ENCODE measurements at regions of chr1 and their contacts with region 1.

Region 1: DNA sequence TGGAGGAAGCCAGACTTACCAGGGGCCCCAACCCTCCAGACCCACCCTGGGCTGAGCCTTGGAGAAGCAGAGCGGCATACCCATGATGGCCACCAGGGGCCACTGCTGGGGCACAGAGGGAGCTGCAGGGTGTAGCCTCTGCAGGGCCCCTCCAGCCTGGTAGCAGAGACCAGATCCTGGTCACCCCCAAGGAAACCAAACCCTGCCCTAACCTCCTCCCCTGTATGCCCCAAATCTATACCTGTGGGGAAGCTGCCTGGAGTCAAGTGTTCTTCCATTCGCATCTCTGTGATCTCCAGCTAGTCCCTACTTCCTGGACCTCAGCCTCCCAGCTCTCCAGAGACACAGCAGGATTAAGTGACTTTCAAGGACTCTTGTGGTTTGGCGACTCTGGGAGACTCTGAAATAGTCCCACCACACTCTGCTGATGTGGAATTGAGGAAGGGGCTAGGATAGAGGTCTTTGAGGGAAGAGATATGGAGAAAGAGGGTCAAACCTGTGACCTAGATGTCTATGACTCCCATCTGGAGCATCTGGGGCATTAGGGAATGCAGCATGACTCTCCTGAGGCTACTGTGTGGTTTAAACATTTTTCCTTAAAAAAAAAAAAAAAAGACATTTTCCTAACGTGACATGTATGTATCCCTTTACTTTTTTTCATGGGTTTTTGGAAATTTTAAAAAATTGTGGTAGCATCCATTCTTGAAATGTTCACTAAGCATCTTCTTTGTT is 119.2 kb upstream of the IPO9 start:
- DNase-seq: peak; percentile 88
- H3K4me3 Mint-ChIP-seq: no peak overlapping the region
- H3K27ac Mint-ChIP-seq: no peak overlapping the region
- H3K4me1 Mint-ChIP-seq: peaks cover 25% of the 10 kb centered on the region
- H3K27me3 Mint-ChIP-seq: no peaks in the 10 kb centered on the region
- CTCF ChIP-seq: peak; percentile 97

Region 2: DNA sequence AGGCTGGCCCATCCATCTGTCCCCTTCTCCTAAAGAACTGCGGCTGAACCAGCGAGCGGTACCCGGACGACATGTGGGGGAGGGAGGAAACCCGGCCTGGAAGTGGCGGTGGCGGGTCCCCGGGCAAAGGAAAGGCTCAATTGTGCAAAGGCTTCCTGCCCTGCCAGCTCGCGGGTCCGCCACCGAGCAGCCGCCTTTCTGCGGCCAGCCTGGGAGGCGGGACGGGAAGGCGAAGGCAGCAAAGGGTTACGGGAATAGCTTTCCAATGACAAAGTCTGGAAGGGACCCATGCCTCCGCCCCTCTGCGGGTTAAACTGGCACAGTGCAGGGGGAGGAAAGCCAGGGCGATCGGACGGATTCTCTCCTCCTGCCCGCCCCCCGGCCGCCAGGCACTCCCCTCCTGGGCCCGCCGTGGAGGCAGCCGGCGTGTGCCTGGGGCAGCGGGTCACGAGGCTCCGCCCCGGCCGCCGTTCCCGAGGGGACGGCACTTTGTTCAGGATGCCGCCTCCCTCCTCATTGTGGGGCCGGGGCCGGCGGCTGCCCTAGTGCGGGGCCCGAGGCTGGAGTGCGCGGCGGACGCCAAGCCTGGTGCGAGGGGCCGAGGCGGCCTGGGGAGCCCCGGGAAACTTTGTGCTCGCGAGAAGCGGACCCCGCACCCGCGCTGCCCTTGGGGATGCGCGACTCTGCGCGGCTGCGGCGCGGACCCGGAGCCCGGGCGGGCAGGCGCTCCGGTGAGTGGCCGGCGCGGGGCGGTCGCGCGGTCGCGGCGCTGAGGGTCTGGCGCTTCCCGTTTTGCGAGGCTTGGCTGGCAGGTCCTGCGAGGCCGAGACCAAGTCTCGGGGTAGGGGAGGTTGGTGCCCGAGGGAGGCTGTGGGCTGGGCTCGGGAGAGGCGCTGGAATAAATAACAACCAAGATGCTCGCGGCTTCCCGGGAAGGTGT is 170.8 kb before region 1 on chr1 and contains the start of gene NAV1:
- CTCF ChIA-PET with region 1: no interaction called
- intact Hi-C with region 1: no loop called
- DNase-seq: peak; percentile 67
- H3K4me3 Mint-ChIP-seq: peak within 1 kb of the TSS; percentile 85
- H3K27ac Mint-ChIP-seq: peak within 1 kb of the TSS; percentile 13
- H3K4me1 Mint-ChIP-seq: peaks cover 64% of the 10 kb centered on the region
- H3K27me3 Mint-ChIP-seq: no peaks in the 10 kb centered on the region
- CTCF ChIP-seq: no peak
- total RNA-seq, gene NAV1: 13.1 and 24.8 TPM in 2 replicates

Region 3: DNA sequence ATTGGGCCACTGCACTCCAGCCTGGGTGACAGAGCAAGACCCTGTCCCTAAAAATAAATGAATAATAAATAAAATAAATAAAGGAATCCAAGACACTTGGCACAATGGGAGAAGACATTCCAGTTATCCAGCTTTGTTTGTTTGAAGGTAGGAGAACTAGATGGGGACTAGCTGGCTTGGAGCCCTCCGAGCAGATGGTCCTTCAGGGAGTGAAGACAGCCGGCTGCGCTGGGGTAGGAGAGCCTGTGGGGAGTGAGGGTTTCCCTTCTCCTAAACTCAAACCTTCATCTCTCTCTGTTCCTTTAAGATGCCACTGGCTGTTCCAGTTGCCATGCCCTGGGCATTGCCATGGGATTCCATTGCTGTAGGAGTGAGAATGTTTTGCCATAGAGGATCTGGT is 50.2 kb before region 1 on chr1:
- CTCF ChIA-PET with region 1: no interaction called
- intact Hi-C with region 1: no loop called
- DNase-seq: no peak
- H3K4me3 Mint-ChIP-seq: no peak overlapping the region
- H3K27ac Mint-ChIP-seq: no peak overlapping the region
- H3K4me1 Mint-ChIP-seq: no peaks in the 10 kb centered on the region
- H3K27me3 Mint-ChIP-seq: peaks cover 38% of the 10 kb centered on the region
- CTCF ChIP-seq: no peak

Region 4: DNA sequence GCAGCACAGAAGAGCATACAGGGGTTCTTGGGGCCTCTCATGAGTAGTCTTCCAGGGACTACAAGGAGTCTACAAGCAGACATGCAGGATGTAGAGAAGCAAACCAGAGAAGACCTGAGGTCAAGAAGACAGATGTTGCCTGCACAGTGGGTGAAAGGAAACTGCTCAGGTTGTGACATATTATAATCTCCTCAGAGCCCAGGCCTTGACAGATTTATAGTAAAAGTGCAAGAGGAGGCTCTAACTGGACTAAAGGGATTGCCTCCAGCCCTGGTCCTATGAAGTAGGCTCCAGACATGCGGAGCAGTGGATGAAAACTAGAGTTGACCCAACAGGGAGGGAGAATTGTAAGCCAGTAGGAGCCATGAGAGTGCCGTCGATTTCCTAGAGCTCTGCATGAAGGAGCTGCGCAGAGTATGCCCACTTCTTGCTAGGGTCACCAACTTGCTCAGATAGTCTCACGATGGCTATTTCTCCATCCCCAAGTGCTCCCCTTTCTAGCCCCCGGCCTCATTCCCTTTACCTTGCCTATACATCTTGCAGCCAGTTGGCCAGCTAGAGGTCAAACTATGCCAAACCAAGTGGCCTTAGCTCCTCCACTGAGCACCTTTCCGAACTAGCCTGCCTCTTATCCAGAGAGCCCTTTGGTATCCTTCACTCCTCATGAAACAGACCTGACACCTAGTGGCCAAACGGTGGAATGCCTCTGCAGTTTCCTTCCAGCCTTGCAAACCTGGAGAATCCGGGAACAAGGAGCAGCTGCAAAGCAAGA is 83.0 kb after region 1 on chr1:
- CTCF ChIA-PET with region 1: interaction called, 140 read pairs
- intact Hi-C with region 1: loop called (anchors 1 kb)
- DNase-seq: peak; percentile 85
- H3K4me3 Mint-ChIP-seq: no peak overlapping the region
- H3K27ac Mint-ChIP-seq: no peak overlapping the region
- H3K4me1 Mint-ChIP-seq: peaks cover 10% of the 10 kb centered on the region
- H3K27me3 Mint-ChIP-seq: no peaks in the 10 kb centered on the region
- CTCF ChIP-seq: peak; percentile 90

Region 5: DNA sequence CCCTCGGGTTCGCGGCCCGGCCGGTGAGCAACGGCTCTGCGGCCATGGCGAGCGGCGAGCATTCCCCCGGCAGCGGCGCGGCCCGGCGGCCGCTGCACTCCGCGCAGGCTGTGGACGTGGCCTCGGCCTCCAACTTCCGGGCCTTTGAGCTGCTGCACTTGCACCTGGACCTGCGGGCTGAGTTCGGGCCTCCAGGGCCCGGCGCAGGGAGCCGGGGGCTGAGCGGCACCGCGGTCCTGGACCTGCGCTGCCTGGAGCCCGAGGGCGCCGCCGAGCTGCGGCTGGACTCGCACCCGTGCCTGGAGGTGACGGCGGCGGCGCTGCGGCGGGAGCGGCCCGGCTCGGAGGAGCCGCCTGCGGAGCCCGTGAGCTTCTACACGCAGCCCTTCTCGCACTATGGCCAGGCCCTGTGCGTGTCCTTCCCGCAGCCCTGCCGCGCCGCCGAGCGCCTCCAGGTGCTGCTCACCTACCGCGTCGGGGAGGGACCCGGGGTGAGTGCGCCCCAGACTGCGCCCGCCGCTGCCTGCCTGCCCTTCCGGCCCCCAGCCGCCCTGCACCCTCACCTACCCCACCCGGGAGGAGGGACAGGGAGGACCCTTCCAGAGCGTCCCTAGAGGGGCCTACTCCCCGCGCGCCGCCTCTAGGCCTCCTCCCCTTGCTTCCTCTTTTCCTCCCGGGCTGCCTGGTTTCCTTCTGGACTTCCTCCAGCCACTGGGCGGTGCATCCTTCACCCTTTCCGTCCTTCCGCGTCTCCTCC is 273.1 kb after region 1 on chr1 and contains the start of gene RNPEP:
- CTCF ChIA-PET with region 1: no interaction called
- intact Hi-C with region 1: loop called (anchors 5 kb)
- DNase-seq: peak; percentile 77
- H3K4me3 Mint-ChIP-seq: peak within 1 kb of the TSS; percentile 96
- H3K27ac Mint-ChIP-seq: peak within 1 kb of the TSS; percentile 84
- H3K4me1 Mint-ChIP-seq: peaks cover 9% of the 10 kb centered on the region
- H3K27me3 Mint-ChIP-seq: no peaks in the 10 kb centered on the region
- CTCF ChIP-seq: peak; percentile 12
- total RNA-seq, gene RNPEP: 86.1 and 91.6 TPM in 2 replicates

Region 6: GRCh38 chr1:202076050-202076511 is 366.4 kb after region 1 on chr1:
- CTCF ChIA-PET with region 1: no interaction called
- intact Hi-C with region 1: no loop called
- DNase-seq: no peak
- H3K4me3 Mint-ChIP-seq: no peak overlapping the region
- H3K27ac Mint-ChIP-seq: peak overlapping the region; percentile 17
- H3K4me1 Mint-ChIP-seq: peaks cover 39% of the 10 kb centered on the region
- H3K27me3 Mint-ChIP-seq: no peaks in the 10 kb centered on the region
- CTCF ChIP-seq: no peak

Measured in Calu3 (cell line).